ENCODE measurements at regions of chr10 and their contacts with region 1.

Region 1: DNA sequence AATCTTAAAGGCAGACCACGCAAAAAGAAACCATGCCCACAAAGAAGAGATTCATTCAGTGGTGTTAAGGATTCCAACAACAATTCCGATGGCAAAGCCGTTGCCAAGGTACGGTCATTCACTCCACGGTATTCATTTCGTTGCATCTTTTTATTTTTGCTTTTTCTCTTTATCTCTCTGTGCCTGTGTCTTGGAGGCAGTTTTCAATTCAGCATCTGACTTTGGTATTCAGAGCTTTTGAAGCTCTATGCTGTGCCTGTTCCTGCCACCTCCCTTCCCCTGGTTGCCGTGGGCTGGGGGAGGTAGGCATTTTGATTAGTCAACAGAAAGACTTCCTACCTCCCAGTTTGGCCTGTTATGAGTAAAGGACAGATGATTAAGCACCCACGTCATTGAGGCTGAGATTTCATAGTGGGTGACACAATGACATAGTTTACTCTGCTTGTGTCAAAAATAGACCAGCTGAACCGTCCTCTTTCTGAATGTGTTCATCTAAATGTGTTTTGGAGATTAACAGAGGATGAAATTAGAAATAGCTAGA is 149.5 kb downstream of the ARID5B start:
- DNase-seq: peak; percentile 91
- H3K4me3 Mint-ChIP-seq: peak overlapping the region; percentile 94
- H3K27ac Mint-ChIP-seq: peak overlapping the region; percentile 100
- H3K4me1 Mint-ChIP-seq: peaks cover 87% of the 10 kb centered on the region
- H3K27me3 Mint-ChIP-seq: no peaks in the 10 kb centered on the region

Region 2: GRCh38 chr10:61943674-61944410 is 107.1 kb before region 1 on chr10:
- CTCF ChIA-PET with region 1: interaction called, 12 read pairs
- intact Hi-C with region 1: loop called (anchors 1 kb)
- DNase-seq: peak; percentile 47
- H3K4me3 Mint-ChIP-seq: peak overlapping the region; percentile 62
- H3K27ac Mint-ChIP-seq: peak overlapping the region; percentile 98
- H3K4me1 Mint-ChIP-seq: peaks cover 71% of the 10 kb centered on the region
- H3K27me3 Mint-ChIP-seq: no peaks in the 10 kb centered on the region

Region 3: GRCh38 chr10:62025901-62026879 is 24.8 kb before region 1 on chr10:
- CTCF ChIA-PET with region 1: interaction called, 11 read pairs
- intact Hi-C with region 1: no loop called
- DNase-seq: no peak
- H3K4me3 Mint-ChIP-seq: no peak overlapping the region
- H3K27ac Mint-ChIP-seq: peak overlapping the region; percentile 68
- H3K4me1 Mint-ChIP-seq: peaks cover 91% of the 10 kb centered on the region
- H3K27me3 Mint-ChIP-seq: no peaks in the 10 kb centered on the region

Region 4: DNA sequence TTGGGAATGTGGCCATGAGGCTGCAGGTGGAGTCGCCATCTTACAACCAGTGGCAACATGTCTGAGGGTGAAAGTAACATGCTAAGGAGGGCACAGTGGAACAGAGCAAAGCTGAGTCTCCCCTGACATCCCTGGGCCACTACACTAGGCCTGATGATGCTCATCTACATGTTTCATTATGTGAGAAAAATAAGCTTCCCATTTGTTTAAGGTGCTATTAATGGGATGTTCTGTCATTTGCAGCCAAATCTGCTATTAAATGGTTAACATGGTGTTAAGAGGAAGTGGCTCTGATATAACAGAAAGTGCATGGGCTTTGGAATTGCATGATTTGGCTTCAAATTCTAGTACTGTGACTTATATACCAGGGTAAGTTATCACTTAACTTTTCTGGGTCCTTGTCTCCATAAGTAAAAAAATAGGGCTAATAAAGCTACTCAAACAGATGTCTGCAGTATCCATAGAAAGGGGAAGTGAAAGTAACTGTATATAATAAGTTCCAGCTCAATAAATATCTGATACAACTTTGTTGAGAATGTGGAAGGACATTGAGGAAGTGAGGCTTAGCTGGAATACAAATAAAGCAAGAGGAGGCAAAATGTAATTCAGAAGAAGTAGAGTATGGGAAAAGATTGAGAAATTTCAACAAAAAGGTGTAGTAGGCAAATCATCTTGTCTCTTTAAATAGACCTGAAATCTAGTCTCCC is 58.8 kb after region 1 on chr10:
- CTCF ChIA-PET with region 1: no interaction called
- intact Hi-C with region 1: no loop called
- DNase-seq: no peak
- H3K4me3 Mint-ChIP-seq: no peak overlapping the region
- H3K27ac Mint-ChIP-seq: no peak overlapping the region
- H3K4me1 Mint-ChIP-seq: peaks cover 41% of the 10 kb centered on the region
- H3K27me3 Mint-ChIP-seq: no peaks in the 10 kb centered on the region

Region 5: DNA sequence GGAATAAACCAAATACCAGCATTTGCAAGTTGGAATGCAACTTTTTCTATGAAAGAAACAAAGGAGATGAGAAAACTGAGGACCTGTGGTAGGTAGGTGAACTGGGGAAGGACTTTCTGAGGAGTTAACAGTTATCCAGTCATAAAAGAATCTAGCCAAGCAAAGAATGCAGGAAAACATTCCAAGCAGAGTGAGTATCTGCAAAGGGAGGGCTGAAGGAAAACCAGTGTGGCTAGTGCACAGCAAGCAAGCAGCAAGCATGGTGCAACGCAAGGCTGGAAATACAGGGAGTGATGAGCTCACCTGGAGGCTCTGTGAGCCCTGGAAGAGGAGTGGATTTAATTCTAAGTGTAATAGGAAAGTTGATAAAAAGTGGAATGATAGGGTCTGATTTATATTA is 173.6 kb after region 1 on chr10:
- CTCF ChIA-PET with region 1: no interaction called
- intact Hi-C with region 1: loop called (anchors 1 kb)
- DNase-seq: no peak
- H3K4me3 Mint-ChIP-seq: no peak overlapping the region
- H3K27ac Mint-ChIP-seq: peak overlapping the region; percentile 86
- H3K4me1 Mint-ChIP-seq: peaks cover 10% of the 10 kb centered on the region
- H3K27me3 Mint-ChIP-seq: no peaks in the 10 kb centered on the region

Region 6: DNA sequence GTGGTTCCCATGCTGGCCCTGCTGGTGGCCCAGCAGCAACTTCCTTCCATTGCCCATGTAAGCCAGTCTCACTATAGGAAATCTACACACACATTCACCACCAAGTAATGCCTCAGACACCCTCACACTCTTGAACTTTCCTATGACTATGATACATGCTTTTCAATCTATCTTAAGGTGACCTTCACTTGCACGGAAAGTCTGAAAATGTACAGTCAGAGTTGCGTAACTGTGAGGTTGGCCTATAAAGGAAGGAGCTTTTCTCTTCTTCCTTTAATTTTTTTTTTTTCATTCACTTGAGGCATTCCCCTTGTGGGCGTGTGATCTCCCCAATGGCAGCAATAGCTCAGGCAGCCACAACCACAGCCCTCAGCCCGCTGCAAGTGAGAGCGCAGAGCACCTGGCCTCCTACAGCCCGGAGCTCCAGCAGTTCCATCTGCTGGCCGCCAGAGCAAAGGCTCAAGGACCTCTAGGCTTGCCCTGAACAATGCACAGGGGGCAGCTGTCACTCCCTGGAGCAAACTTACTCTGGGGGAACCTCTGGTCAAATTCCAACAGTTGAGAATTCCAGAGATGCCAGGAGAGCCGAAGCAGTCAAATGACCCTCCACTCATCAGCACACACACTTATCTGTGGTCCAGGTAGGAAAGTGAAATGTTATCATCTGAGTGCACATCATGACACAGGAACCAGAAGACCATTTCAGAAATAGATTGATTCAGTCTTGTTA is 630.4 kb after region 1 on chr10:
- CTCF ChIA-PET with region 1: no interaction called
- intact Hi-C with region 1: loop called (anchors 1 kb)
- DNase-seq: peak; percentile 93
- H3K4me3 Mint-ChIP-seq: no peak overlapping the region
- H3K27ac Mint-ChIP-seq: peak overlapping the region; percentile 72
- H3K4me1 Mint-ChIP-seq: peaks cover 33% of the 10 kb centered on the region
- H3K27me3 Mint-ChIP-seq: no peaks in the 10 kb centered on the region

Region 7: DNA sequence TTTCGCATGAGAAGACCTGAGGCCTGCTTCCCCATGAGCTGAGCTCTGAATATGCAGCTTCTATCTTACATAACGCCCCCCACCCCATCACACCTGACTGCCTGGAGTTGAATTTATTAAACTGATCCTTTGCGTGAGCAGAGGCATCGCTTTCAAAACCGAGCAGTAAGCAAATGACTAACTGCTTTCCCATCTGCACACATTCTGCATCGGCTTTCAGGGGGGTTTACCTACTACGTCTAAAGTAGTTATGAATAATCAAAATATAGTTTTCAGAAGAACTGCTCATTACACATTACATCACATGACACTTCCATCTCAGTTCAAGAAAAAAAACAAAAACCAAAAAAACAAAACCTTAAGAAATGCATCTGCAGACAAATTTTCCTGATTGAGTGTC is 819.9 kb after region 1 on chr10:
- CTCF ChIA-PET with region 1: no interaction called
- intact Hi-C with region 1: no loop called
- DNase-seq: peak; percentile 22
- H3K4me3 Mint-ChIP-seq: no peak overlapping the region
- H3K27ac Mint-ChIP-seq: no peak overlapping the region
- H3K4me1 Mint-ChIP-seq: peaks cover 5% of the 10 kb centered on the region
- H3K27me3 Mint-ChIP-seq: peaks cover 5% of the 10 kb centered on the region